WTC11 (cell line): ENCODE measurements at regions of chr5 and their contacts with region 1.

Region 1: GRCh38 chr5:172059661-172060100 is 53.2 kb upstream of the FBXW11 start:
- DNase-seq: no peak
- ATAC-seq: peak; percentile 68
- H3K4me3 Mint-ChIP-seq: no peak overlapping the region
- H3K27ac Mint-ChIP-seq: no peak overlapping the region
- H3K4me1 Mint-ChIP-seq: 0 out of 2 replicates have a peak, but pooled peaks cover 2% of the 10 kb centered on the region
- H3K27me3 Mint-ChIP-seq: no peaks in the 10 kb centered on the region
- CTCF ChIP-seq: peak; percentile 66

Region 2: GRCh38 chr5:171913987-171914273 is 145.8 kb before region 1 on chr5:
- CTCF ChIA-PET with region 1: interaction called, 53 read pairs
- POLR2A ChIA-PET with region 1: no interaction called
- DNase-seq: no peak
- ATAC-seq: no peak
- H3K4me3 Mint-ChIP-seq: no peak overlapping the region
- H3K27ac Mint-ChIP-seq: peak overlapping the region; percentile 69; the same call in 1 of the 2 replicates
- H3K4me1 Mint-ChIP-seq: peaks cover 44% of the 10 kb centered on the region
- H3K27me3 Mint-ChIP-seq: no peaks in the 10 kb centered on the region
- CTCF ChIP-seq: no peak

Region 3: DNA sequence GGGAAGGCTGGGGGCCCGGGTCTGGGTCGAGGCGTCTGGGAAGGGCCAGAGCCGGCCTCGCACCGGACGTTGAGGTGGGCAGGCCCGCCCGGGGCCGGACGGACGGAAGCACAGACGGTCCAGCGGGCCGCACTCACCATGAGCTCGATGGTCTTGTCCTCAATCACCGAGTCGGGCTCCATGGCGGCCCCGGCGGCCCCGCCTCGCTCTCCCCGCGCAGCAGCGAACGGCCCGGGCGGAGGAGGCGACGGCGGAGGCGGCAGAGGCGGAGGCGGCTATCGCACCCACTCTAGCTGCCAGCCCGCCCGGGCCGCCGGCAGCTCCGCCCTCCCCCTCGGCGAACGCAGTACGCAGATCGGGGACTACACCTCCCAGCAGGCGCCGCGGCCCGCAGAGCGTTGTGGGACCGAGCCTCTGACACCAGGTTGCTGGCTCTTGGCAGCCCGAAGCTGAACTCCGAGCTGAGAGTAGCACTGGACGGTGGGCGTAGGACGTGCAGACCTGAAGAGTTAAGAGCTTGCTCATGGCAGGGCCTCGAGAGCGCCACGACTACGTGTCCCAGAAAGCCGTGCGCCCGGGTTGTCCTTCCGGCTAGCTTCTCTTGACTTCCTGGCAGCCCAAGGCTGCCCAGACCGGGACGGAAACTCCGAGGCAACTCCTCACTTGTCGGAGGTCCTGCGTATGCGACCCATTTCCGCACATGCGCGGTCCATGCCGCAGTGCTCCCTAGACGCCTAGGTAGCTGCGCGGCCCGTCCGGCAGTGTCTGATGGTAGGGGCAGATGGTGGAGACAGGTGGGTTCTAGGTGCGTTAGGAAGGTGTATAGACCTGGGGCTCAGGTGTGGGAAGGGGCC is 53.1 kb before region 1 on chr5 and contains the start of gene FBXW11:
- CTCF ChIA-PET with region 1: interaction called, 16 read pairs
- POLR2A ChIA-PET with region 1: interaction called, 4 read pairs
- DNase-seq: peak; percentile 96
- ATAC-seq: peak; percentile 82
- H3K4me3 Mint-ChIP-seq: peak within 1 kb of the TSS; percentile 93
- H3K27ac Mint-ChIP-seq: peak within 1 kb of the TSS; percentile 95
- H3K4me1 Mint-ChIP-seq: peaks cover 68% of the 10 kb centered on the region
- H3K27me3 Mint-ChIP-seq: peaks cover 16% of the 10 kb centered on the region
- CTCF ChIP-seq: no peak
- total RNA-seq, gene FBXW11: 48.4 to 52.2 TPM (median 51.2 TPM) in 3 replicates

Region 4: GRCh38 chr5:172044631-172045314 is 14.9 kb before region 1 on chr5:
- CTCF ChIA-PET with region 1: interaction called, 15 read pairs
- POLR2A ChIA-PET with region 1: interaction called, 4 read pairs
- DNase-seq: no peak
- ATAC-seq: peak; percentile 81
- H3K4me3 Mint-ChIP-seq: no peak overlapping the region
- H3K27ac Mint-ChIP-seq: peak overlapping the region; percentile 87; the same call in 1 of the 2 replicates
- H3K4me1 Mint-ChIP-seq: peaks cover 27% of the 10 kb centered on the region
- H3K27me3 Mint-ChIP-seq: no peaks in the 10 kb centered on the region
- CTCF ChIP-seq: 0 out of 2 replicates have a peak, but pooled peaks have one; percentile 7

Region 5: GRCh38 chr5:172188033-172188892 is 128.6 kb after region 1 on chr5 and contains the start of gene STK10:
- CTCF ChIA-PET with region 1: interaction called, 21 read pairs
- POLR2A ChIA-PET with region 1: interaction called, 7 read pairs
- DNase-seq: peak; percentile 93
- ATAC-seq: peak; percentile 89
- H3K4me3 Mint-ChIP-seq: peak within 1 kb of the TSS; percentile 93
- H3K27ac Mint-ChIP-seq: peak within 1 kb of the TSS; percentile 38; the same call in 1 of the 2 replicates
- H3K4me1 Mint-ChIP-seq: peaks cover 28% of the 10 kb centered on the region
- H3K27me3 Mint-ChIP-seq: peaks cover 14% of the 10 kb centered on the region
- CTCF ChIP-seq: peak; percentile 38; the same call in 1 of the 2 replicates
- total RNA-seq, gene STK10: 13.1 to 20.5 TPM (median 15.0 TPM) in 3 replicates